Ovary (tissue), 10 donors: ENCODE measurements at regions of chr12 and their contacts with region 1.

Region 1: DNA sequence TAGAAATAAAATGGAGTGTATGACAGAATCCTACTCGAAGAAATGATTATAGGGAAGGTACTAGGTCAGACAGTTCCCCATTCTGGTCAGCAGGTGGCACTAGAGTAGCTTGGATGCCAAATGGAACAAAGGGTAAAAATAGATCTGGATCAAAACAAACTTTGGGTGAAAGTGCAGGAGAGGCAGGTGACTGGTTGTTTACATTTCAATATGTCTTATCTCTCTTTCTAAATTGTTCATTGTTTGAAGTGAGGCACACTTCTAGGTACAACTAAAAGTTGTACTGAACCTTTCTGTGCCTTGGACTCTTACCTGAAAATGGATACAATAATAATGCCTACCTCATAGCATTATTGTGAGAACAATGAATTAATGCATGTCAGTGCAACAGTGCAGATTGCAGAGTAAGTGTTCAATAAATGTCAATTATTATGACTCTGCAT is 62.0 kb upstream of the OSBPL8 start:
- DNase-seq: peak; percentile 35 to 76 (median 57)
- H3K4me3 ChIP-seq: no peak overlapping the region
- H3K27ac ChIP-seq: no peak overlapping the region
- H3K4me1 ChIP-seq: peaks cover 2% of the 10 kb centered on the region
- H3K27me3 ChIP-seq: no peaks in the 10 kb centered on the region
- CTCF ChIP-seq: peak; percentile 73 to 90 (median 88)
- EP300 ChIP-seq: no peak
- POLR2A ChIP-seq: no peak

Region 2: GRCh38 chr12:76790564-76791552 is 169.3 kb after region 1 on chr12:
- intact Hi-C with region 1: loop called (anchors 5 to 10 kb)
- DNase-seq: no peak
- H3K4me3 ChIP-seq: no peak overlapping the region
- H3K27ac ChIP-seq: no peak overlapping the region
- H3K4me1 ChIP-seq: peaks cover 4% of the 10 kb centered on the region
- H3K27me3 ChIP-seq: no peaks in the 10 kb centered on the region
- CTCF ChIP-seq: peak; percentile 59 to 73 (median 62)
- EP300 ChIP-seq: no peak
- POLR2A ChIP-seq: no peak

Region 3: GRCh38 chr12:76864791-76865400 is 243.3 kb after region 1 on chr12:
- intact Hi-C with region 1: no loop called
- DNase-seq: no peak
- H3K4me3 ChIP-seq: no peak overlapping the region
- H3K27ac ChIP-seq: no peak overlapping the region
- H3K4me1 ChIP-seq: peaks cover 1% of the 10 kb centered on the region
- H3K27me3 ChIP-seq: no peaks in the 10 kb centered on the region
- CTCF ChIP-seq: no peak
- EP300 ChIP-seq: no peak
- POLR2A ChIP-seq: no peak

Region 4: GRCh38 chr12:77001181-77001758 is 379.7 kb after region 1 on chr12:
- intact Hi-C with region 1: loop called in 2 of 4 experiments (anchors 5 to 10 kb)
- DNase-seq: no peak
- H3K4me3 ChIP-seq: no peak overlapping the region
- H3K27ac ChIP-seq: no peak overlapping the region
- H3K4me1 ChIP-seq: no peaks in the 10 kb centered on the region
- H3K27me3 ChIP-seq: no peaks in the 10 kb centered on the region
- CTCF ChIP-seq: no peak
- EP300 ChIP-seq: no peak
- POLR2A ChIP-seq: no peak

Region 5: GRCh38 chr12:77010691-77011548 is 389.3 kb after region 1 on chr12:
- intact Hi-C with region 1: loop called (anchors 5 to 10 kb)
- DNase-seq: peak; percentile 47 to 75 (median 74)
- H3K4me3 ChIP-seq: no peak overlapping the region
- H3K27ac ChIP-seq: no peak overlapping the region
- H3K4me1 ChIP-seq: no peaks in the 10 kb centered on the region
- H3K27me3 ChIP-seq: no peaks in the 10 kb centered on the region
- CTCF ChIP-seq: peak; percentile 54 to 67 (median 56)
- EP300 ChIP-seq: no peak
- POLR2A ChIP-seq: no peak